ENCODE measurements at regions of chr11 and their contacts with region 1.

Region 1: DNA sequence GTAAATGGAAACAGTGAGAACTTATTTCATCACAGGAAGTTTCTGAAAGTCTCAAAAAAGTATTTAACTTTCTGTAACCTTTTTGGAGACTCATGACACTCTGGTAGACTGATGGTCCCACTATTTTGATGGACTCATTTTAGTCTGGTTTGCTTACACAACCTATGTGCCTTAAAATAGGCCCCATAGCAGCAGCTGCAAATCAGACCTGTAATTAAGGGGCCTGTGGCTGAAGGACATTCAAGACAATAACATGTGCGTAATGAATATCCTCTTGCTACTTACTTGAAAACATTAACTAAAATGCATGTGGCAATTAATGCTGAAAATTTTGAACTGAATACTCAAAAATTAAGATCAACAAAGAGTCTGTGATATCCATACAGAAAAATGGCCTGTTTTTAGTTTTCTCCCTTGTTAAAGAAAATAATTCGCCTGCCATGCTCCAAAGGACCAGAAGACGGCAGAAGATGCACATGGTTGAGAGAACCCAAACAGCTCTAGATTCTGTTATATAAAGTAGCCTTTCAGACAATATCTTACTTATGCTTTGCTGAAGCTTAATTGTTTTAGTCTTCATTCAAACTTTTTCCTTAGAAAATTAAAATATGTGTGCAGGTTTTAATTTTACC is 568.5 kb downstream of the KCNA4 start:
- DNase-seq: peak; percentile 3
- H3K4me3 ChIP-seq: no peak overlapping the region
- H3K27ac ChIP-seq: no peak overlapping the region
- H3K4me1 ChIP-seq: peaks cover 4% of the 10 kb centered on the region
- H3K27me3 ChIP-seq: peaks cover 2% of the 10 kb centered on the region
- CTCF ChIP-seq: peak; percentile 55 to 75

Region 2: DNA sequence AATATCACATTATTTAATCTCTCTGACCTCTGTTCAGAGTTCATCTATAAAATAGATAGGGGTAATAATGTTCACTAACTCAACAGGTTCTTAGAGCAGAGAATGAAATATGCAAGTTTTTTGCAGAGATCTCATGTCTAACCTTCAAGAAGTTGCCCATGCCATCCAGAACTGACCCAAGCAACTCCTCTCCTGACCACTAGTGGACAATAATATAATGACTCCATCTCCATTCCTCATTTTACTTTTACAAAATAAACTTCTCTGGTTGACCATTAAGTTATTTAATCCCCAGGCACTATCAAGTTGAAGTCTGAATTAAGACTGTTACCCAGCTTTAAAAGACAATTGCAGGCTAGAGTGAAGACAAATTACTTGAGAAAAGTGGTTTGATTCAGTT is 185.9 kb after region 1 on chr11:
- CTCF ChIA-PET with region 1: no interaction called
- dilution Hi-C with region 1: no loop called
- in situ Hi-C with region 1: no loop called
- intact Hi-C with region 1: loop called (anchors 1 kb)
- DNase-seq: no peak
- H3K4me3 ChIP-seq: no peak overlapping the region
- H3K27ac ChIP-seq: no peak overlapping the region
- H3K4me1 ChIP-seq: no peaks in the 10 kb centered on the region
- H3K27me3 ChIP-seq: no peaks in the 10 kb centered on the region
- CTCF ChIP-seq: peak; percentile 41 to 46

Region 3: DNA sequence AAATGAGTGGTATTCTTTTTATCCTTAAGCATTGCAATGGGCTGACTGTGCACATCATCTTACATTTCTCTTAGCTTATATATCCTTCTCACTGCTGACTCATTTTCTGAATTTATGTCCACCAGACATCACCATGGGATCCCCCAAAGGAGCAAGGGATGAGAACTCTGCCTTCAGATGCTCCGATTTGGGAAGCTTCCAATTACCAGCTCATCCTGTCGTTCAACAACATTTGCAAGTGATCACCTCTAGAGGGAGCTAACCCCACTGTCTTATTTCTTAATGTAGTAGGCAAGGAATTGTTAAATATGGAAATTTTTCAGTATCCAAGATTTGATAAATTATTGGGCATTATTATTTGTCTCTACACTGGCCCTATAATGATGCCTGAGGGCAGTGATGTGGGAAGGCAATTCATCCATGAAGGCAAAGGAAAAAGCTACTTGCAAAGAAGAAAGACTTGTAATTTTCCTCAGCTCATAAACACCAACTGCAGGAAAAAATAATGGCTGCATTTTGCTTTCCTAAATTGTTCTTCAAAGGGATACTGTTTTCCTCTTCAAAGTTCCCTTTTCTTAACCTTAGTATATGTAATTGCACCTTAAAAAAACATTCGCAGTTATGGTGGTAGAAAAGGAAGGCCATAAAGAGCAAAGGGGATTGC is 680.0 kb after region 1 on chr11:
- CTCF ChIA-PET with region 1: no interaction called
- dilution Hi-C with region 1: no loop called
- in situ Hi-C with region 1: loop called in 1 of 2 experiments (anchors 25 kb)
- intact Hi-C with region 1: loop called (anchors 5 kb)
- DNase-seq: peak; percentile 32
- H3K4me3 ChIP-seq: no peak overlapping the region
- H3K27ac ChIP-seq: no peak overlapping the region
- H3K4me1 ChIP-seq: no peaks in the 10 kb centered on the region
- H3K27me3 ChIP-seq: no peaks in the 10 kb centered on the region
- CTCF ChIP-seq: peak; percentile 74 to 91

Region 4: DNA sequence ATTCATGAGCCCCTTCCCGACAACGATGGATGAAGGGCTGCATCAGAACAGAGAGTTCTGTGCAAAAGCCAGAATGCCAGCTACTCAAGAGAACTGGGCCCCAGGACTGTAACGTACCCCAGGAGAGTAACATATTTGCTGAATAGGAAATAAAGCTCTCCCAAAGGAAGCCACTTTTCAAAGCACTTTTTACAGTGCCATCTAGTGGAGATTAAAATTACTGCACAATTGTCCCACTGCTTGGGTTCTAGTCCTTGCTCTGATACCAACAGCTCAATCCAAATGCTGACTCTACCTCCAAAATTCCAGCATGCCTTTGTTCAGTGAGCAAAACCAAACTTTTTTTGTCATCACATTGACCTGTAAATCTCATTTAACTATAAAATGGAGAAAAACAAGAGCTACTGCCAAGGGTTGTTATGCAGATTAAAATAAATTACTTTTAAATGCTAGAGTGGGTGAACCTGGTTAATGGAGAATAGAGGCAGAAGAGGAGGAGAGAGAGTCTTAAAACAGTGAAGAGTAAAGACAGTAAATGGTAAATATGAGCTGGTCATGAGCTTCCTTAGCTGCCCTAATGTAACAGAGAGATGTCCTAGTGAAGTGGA is 694.8 kb after region 1 on chr11:
- CTCF ChIA-PET with region 1: no interaction called
- dilution Hi-C with region 1: no loop called
- in situ Hi-C with region 1: loop called in 1 of 2 experiments (anchors 25 kb)
- intact Hi-C with region 1: loop called (anchors 1 kb)
- DNase-seq: peak; percentile 17
- H3K4me3 ChIP-seq: no peak overlapping the region
- H3K27ac ChIP-seq: no peak overlapping the region
- H3K4me1 ChIP-seq: no peaks in the 10 kb centered on the region
- H3K27me3 ChIP-seq: no peaks in the 10 kb centered on the region
- CTCF ChIP-seq: peak; percentile 62 to 67

Region 5: GRCh38 chr11:30196400-30197206 is 748.2 kb after region 1 on chr11:
- CTCF ChIA-PET with region 1: no interaction called
- dilution Hi-C with region 1: no loop called
- in situ Hi-C with region 1: no loop called
- intact Hi-C with region 1: loop called (anchors 5 kb)
- DNase-seq: peak; percentile 28
- H3K4me3 ChIP-seq: no peak overlapping the region
- H3K27ac ChIP-seq: no peak overlapping the region
- H3K4me1 ChIP-seq: peaks cover 17% of the 10 kb centered on the region
- H3K27me3 ChIP-seq: no peaks in the 10 kb centered on the region
- CTCF ChIP-seq: peak; percentile 80 to 87

Region 6: DNA sequence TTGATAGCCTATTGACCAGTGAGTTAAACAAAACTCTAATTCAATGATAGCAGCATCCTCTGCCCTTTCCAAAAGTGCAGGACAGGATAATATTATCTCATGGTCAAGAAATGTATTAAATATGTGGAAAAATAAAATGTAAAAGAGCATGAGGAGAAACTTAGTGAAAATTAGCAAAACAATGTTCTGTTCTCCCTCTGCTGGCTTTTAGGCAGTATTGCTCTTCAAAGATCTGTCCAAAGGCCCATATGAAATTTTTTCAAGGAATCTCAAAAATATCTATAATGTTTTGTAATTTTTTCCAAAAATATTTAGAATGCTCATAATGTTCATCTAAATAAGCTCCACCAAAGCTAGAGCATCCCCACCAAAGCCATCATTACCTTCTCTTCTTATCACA is 866.3 kb after region 1 on chr11:
- CTCF ChIA-PET with region 1: no interaction called
- dilution Hi-C with region 1: no loop called
- in situ Hi-C with region 1: no loop called
- intact Hi-C with region 1: loop called (anchors 1 kb)
- DNase-seq: no peak
- H3K4me3 ChIP-seq: no peak overlapping the region
- H3K27ac ChIP-seq: no peak overlapping the region
- H3K4me1 ChIP-seq: peaks cover 6% of the 10 kb centered on the region
- H3K27me3 ChIP-seq: no peaks in the 10 kb centered on the region
- CTCF ChIP-seq: peak; percentile 61 to 62

Region 7: GRCh38 chr11:30917859-30918478 is 1469.6 kb after region 1 on chr11:
- CTCF ChIA-PET with region 1: interaction called, 41 read pairs
- dilution Hi-C with region 1: no loop called
- in situ Hi-C with region 1: loop called in 1 of 2 experiments (anchors 25 kb)
- intact Hi-C with region 1: loop called (anchors 5 kb)
- DNase-seq: peak; percentile 26
- H3K4me3 ChIP-seq: no peak overlapping the region
- H3K27ac ChIP-seq: no peak overlapping the region
- H3K4me1 ChIP-seq: no peaks in the 10 kb centered on the region
- H3K27me3 ChIP-seq: peaks cover 4% of the 10 kb centered on the region
- CTCF ChIP-seq: peak; percentile 58 to 61

Measured in mammary epithelial cell (primary cell).